ENCODE measurements at regions of chr6 and their contacts with region 1.

Region 1: GRCh38 chr6:170295510-170296422 is 4.9 kb upstream of the DLL1 start:
- DNase-seq: peak in 2 of 5 donors; percentile 23 to 45
- ATAC-seq: peak in 2 of 4 donors; percentile 6 to 22
- H3K4me3 ChIP-seq: peak overlapping the region; percentile 44 to 64 (median 56)
- H3K27ac ChIP-seq: peak overlapping the region in 1 of 12 donors; percentile 8
- H3K4me1 ChIP-seq: peaks cover 11 to 51% (median 36%) of the 10 kb centered on the region in 12 donors
- H3K27me3 ChIP-seq: peaks cover 9 to 75% (median 33%) of the 10 kb centered on the region in 9 donors
- CTCF ChIP-seq: no peak
- POLR2A ChIP-seq: no peak

Region 2: DNA sequence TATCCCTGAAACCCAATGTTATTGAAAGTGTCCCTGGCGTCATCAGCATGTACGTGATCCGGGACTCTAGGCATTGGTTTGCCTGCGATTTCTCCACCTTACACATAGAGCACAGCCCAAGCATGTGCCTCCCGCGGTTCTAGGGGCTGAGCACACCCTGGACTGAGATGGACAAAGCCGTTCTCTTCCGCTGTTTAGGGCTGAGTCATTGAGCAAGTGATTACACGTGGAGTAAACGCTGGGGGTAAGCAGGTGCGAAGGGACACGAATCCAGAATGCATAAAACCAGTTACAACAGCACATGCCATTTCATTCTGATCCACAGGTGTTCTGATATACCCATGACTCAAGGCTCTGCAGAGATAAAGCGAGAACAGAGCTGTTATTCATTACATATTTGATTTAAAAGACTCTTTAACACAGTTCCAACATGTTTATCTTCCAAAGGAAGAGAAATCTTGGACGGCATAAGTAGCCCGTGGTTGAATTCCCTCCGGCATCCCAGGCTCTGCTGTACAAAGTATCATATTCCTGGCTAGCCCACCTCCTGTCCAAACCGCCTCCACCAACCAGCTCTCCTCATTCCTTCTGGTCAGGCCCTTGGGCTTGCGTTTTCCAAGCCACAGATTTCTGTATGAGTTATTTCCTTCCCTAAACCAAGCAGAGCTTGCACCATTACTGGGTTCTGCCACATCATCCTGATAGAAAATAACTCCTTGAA is 1006.0 kb before region 1 on chr6:
- intact Hi-C with region 1: no loop called
- DNase-seq: peak in 4 of 5 donors; percentile 60 to 69 (median 68)
- ATAC-seq: peak; percentile 80 to 89 (median 85)
- H3K4me3 ChIP-seq: no peak overlapping the region
- H3K27ac ChIP-seq: peak overlapping the region; percentile 11 to 87 (median 66)
- H3K4me1 ChIP-seq: peaks cover 0 to 39% (median 0%) of the 10 kb centered on the region in 12 donors
- H3K27me3 ChIP-seq: no peaks in the 10 kb centered on the region
- CTCF ChIP-seq: no peak
- POLR2A ChIP-seq: no peak

Region 3: DNA sequence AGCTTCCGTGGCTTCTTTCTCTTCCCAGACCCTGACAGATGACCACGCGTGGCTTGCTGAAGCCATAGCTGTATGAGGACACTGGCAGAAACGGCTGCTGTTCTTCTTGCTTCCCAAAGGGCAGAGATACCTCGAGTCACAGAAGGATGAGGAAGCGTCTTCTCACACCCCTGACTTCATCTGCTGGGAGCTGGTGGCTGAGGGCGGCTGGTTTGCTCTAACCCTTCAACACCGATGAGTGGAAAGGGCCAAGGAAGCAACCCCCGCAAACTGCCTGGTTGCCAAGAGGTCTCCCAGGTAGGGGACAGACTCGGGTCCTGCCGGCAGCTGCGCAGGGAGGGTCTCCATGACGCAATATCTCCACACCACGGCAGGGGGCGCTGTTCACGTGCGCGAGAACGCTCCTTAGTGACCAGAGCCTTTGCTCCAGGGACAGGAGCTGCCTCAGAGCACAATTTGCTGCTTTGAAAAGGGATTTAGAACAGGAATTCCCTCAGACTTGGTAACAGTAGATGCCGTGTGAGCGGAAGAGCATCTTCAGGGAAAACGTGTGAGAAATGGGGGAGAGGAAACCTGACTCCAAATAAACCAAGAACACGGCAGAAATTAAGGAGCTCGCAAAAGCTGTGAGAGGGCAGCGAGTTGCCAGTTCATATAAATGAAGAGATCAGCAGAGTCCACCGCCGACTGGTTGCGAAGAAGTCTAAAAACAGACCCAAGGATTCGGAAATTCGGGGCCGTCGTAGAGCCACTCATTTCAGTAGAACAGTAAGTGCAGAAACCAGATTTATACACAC is 464.1 kb before region 1 on chr6:
- intact Hi-C with region 1: loop called in 9 of 10 experiments (anchors 2 to 5 kb)
- DNase-seq: peak; percentile 71 to 91 (median 75)
- ATAC-seq: peak; percentile 78 to 92 (median 88)
- H3K4me3 ChIP-seq: no peak overlapping the region
- H3K27ac ChIP-seq: no peak overlapping the region
- H3K4me1 ChIP-seq: peaks cover 0 to 15% (median 5%) of the 10 kb centered on the region in 12 donors
- H3K27me3 ChIP-seq: peaks cover 0 to 20% (median 0%) of the 10 kb centered on the region in 9 donors
- CTCF ChIP-seq: peak; percentile 85 to 97 (median 93)
- POLR2A ChIP-seq: no peak

Region 4: GRCh38 chr6:169969372-169970099 is 326.2 kb before region 1 on chr6:
- intact Hi-C with region 1: loop called in 8 of 10 experiments (anchors 5 to 10 kb)
- DNase-seq: peak in 1 of 5 donors; percentile 4
- ATAC-seq: no peak
- H3K4me3 ChIP-seq: no peak overlapping the region
- H3K27ac ChIP-seq: no peak overlapping the region
- H3K4me1 ChIP-seq: no peaks in the 10 kb centered on the region
- H3K27me3 ChIP-seq: no peaks in the 10 kb centered on the region
- CTCF ChIP-seq: no peak
- POLR2A ChIP-seq: no peak

Region 5: GRCh38 chr6:170039156-170040107 is 256.3 kb before region 1 on chr6:
- intact Hi-C with region 1: loop called in 4 of 10 experiments (anchors 5 to 10 kb)
- DNase-seq: peak in 3 of 5 donors; percentile 1 to 28 (median 20)
- ATAC-seq: no peak
- H3K4me3 ChIP-seq: no peak overlapping the region
- H3K27ac ChIP-seq: no peak overlapping the region
- H3K4me1 ChIP-seq: peaks cover 0 to 31% (median 12%) of the 10 kb centered on the region in 12 donors
- H3K27me3 ChIP-seq: no peaks in the 10 kb centered on the region
- CTCF ChIP-seq: no peak
- POLR2A ChIP-seq: no peak

Region 6: DNA sequence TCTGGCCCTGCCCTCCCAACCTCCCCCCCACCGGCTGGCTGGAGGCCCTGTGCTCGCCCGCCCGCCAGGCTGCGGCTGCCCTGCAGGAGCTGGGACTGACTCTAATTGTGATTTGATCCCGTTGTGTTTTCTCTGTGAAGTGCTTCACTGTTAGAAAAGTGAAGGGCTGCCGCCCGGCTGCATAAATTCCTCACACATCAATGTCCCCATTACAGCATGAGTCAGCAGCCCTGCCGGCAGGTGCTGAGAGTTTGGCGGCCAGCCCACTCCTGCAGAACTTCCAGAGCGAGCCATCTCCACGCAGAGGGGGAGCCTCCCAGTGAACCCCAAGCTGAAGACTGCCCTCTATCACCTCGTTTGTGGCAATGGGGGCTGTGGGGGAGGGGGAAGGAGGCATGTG is 142.8 kb before region 1 on chr6:
- intact Hi-C with region 1: loop called in 1 of 10 experiments (anchors 5 kb)
- DNase-seq: peak in 3 of 5 donors; percentile 54 to 71 (median 62)
- ATAC-seq: peak in 2 of 4 donors; percentile 36 to 59
- H3K4me3 ChIP-seq: peak overlapping the region in 3 of 12 donors; percentile 20 to 41 (median 34)
- H3K27ac ChIP-seq: peak overlapping the region; percentile 73 to 93 (median 84)
- H3K4me1 ChIP-seq: peaks cover 0 to 36% (median 25%) of the 10 kb centered on the region in 12 donors
- H3K27me3 ChIP-seq: peaks cover 0 to 4% (median 0%) of the 10 kb centered on the region in 9 donors
- CTCF ChIP-seq: no peak
- POLR2A ChIP-seq: no peak

Region 7: GRCh38 chr6:170224694-170225660 is 70.8 kb before region 1 on chr6:
- intact Hi-C with region 1: no loop called
- DNase-seq: peak in 4 of 5 donors; percentile 9 to 40 (median 13)
- ATAC-seq: peak in 2 of 4 donors; percentile 11 to 17
- H3K4me3 ChIP-seq: no peak overlapping the region
- H3K27ac ChIP-seq: peak overlapping the region in 3 of 12 donors; percentile 21 to 50 (median 24)
- H3K4me1 ChIP-seq: peaks cover 0 to 17% (median 6%) of the 10 kb centered on the region in 12 donors
- H3K27me3 ChIP-seq: no peaks in the 10 kb centered on the region
- CTCF ChIP-seq: no peak
- POLR2A ChIP-seq: no peak

Region 8: GRCh38 chr6:170522565-170523183 is 226.9 kb after region 1 on chr6:
- intact Hi-C with region 1: loop called in 6 of 10 experiments (anchors 5 to 10 kb)
- DNase-seq: peak in 2 of 5 donors; percentile 24 to 38
- ATAC-seq: peak in 3 of 4 donors; percentile 48 to 56 (median 51)
- H3K4me3 ChIP-seq: no peak overlapping the region
- H3K27ac ChIP-seq: peak overlapping the region in 11 of 12 donors; percentile 2 to 88 (median 73)
- H3K4me1 ChIP-seq: peaks cover 0 to 28% (median 21%) of the 10 kb centered on the region in 12 donors
- H3K27me3 ChIP-seq: no peaks in the 10 kb centered on the region
- CTCF ChIP-seq: peak in 4 of 12 donors; percentile 5 to 37 (median 29)
- POLR2A ChIP-seq: no peak